CD8-positive, alpha-beta T cell (primary cell): ENCODE measurements at regions of chr16 and their contacts with region 1.

Region 1: GRCh38 chr16:2867987-2868789 is 10.2 kb upstream of the PRSS22 start:
- DNase-seq: peak; percentile 91 to 98 (median 95)
- ATAC-seq: peak; percentile 98
- H3K4me3 ChIP-seq: peak overlapping the region; percentile 77
- H3K4me3 Mint-ChIP-seq: peak overlapping the region; percentile 83
- H3K27ac ChIP-seq: peak overlapping the region; percentile 52 to 85
- H3K27ac Mint-ChIP-seq: peak overlapping the region; percentile 87
- H3K4me1 ChIP-seq: peaks cover 10% of the 10 kb centered on the region
- H3K4me1 Mint-ChIP-seq: peaks cover 18% of the 10 kb centered on the region
- H3K27me3 ChIP-seq: no peaks in the 10 kb centered on the region
- H3K27me3 Mint-ChIP-seq: no peaks in the 10 kb centered on the region
- CTCF ChIP-seq: peak; percentile 92

Region 2: GRCh38 chr16:2673066-2673999 is 194.9 kb before region 1 on chr16:
- CTCF ChIA-PET with region 1: no interaction called
- POLR2A ChIA-PET with region 1: no interaction called
- intact Hi-C with region 1: loop called in 1 of 2 experiments (anchors 5 kb)
- DNase-seq: peak; percentile 91 to 98 (median 95)
- ATAC-seq: peak; percentile 92
- H3K4me3 ChIP-seq: peak overlapping the region; percentile 80 to 94
- H3K4me3 Mint-ChIP-seq: peak overlapping the region; percentile 84
- H3K27ac ChIP-seq: peak overlapping the region; percentile 76 to 78
- H3K27ac Mint-ChIP-seq: peak overlapping the region; percentile 80
- H3K4me1 ChIP-seq: peaks cover 14% of the 10 kb centered on the region
- H3K4me1 Mint-ChIP-seq: peaks cover 35% of the 10 kb centered on the region
- H3K27me3 ChIP-seq: no peaks in the 10 kb centered on the region
- H3K27me3 Mint-ChIP-seq: no peaks in the 10 kb centered on the region
- CTCF ChIP-seq: no peak

Region 3: DNA sequence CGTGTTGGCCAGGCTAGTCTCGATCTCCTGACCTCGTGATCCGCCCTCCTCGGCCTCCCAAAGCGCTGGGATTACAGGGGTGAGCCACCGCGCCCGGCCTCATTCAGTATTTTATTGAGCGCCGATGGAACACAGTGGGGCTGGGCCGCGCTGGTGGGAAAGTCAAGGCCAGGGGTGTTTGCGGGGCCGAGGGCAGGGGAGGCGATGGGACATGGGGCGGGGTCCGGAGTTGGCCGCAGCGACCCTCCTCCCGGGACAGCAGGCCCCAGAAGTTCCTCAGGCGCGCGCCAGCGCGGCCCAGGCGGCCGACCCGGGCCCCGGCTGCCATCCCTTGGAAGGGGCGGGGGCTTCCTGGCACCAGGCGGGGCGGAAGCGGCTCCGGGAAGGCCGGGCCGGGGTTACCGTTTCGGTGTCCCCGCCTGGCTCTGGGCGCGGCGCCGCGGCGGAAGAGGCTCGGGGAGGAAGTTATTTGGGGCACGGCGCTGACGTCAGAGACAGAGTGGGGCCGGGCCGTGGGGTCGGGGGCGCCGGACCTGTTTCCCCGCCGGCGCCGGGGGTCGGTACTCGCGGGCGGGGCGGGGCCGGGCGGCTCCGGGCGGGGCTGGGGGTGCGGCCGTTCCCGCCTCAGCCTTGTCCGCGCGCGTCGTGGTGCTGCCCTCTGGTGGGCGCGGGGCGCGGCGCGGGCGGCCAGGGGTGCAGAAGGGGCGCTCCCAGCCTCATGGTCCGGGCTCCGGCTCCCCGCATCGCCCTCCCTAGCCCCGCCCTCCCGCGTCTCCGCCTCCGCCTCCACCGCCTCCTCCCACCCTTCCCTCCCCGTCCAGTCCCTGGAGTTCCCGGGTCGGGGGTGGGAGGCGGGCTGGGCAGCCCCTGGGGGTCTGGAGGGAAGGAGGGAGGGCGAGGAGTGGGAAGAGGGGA is 147.2 kb before region 1 on chr16:
- CTCF ChIA-PET with region 1: no interaction called
- POLR2A ChIA-PET with region 1: no interaction called
- intact Hi-C with region 1: loop called (anchors 2 to 10 kb)
- DNase-seq: peak; percentile 69 to 93 (median 82)
- ATAC-seq: peak; percentile 90
- H3K4me3 ChIP-seq: peak overlapping the region; percentile 52 to 62
- H3K4me3 Mint-ChIP-seq: peak overlapping the region; percentile 78
- H3K27ac ChIP-seq: peak overlapping the region; percentile 40 to 57
- H3K27ac Mint-ChIP-seq: peak overlapping the region; percentile 79
- H3K4me1 ChIP-seq: peaks cover 1% of the 10 kb centered on the region
- H3K4me1 Mint-ChIP-seq: no peaks in the 10 kb centered on the region
- H3K27me3 ChIP-seq: no peaks in the 10 kb centered on the region
- H3K27me3 Mint-ChIP-seq: peaks cover 12% of the 10 kb centered on the region
- CTCF ChIP-seq: peak; percentile 77

Region 4: DNA sequence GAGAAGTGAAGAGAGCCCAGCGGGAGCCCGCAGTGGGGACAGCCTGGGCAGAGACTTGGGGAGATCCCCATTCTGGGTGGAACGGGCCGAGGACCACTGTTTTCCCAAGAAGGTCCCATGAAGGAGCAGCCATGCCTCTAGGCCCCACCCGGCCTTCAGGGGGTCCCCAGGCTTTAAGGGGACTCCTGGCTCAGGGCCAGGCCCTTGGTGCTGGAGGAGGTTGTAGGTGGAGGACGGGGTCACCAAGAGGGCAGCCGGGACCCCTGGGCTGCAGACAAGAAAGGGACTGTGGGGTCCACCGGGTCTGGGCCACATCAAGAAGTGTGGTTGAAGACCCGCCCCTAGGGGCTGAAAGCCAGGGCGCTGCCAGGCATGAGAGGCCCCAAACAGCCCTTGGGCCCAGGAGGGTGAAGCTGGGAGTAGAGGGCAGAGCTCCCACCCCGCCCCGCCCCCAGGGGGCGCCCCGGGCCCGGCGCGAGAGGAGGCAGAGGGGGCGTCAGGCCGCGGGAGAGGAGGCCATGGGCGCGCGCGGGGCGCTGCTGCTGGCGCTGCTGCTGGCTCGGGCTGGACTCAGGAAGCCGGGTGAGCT is 51.3 kb before region 1 on chr16 and contains the start of gene PRSS21:
- CTCF ChIA-PET with region 1: no interaction called
- POLR2A ChIA-PET with region 1: no interaction called
- intact Hi-C with region 1: no loop called
- DNase-seq: peak in 5 of 9 experiments; percentile 11 to 62 (median 43)
- ATAC-seq: peak; percentile 55
- H3K4me3 ChIP-seq: no peak within 1 kb of the TSS
- H3K4me3 Mint-ChIP-seq: no peak within 1 kb of the TSS
- H3K27ac ChIP-seq: no peak within 1 kb of the TSS
- H3K27ac Mint-ChIP-seq: no peak within 1 kb of the TSS
- H3K4me1 ChIP-seq: no peaks in the 10 kb centered on the region
- H3K4me1 Mint-ChIP-seq: no peaks in the 10 kb centered on the region
- H3K27me3 ChIP-seq: peaks cover 0 to 5% of the 10 kb centered on the region in 2 experiments
- H3K27me3 Mint-ChIP-seq: peaks cover 12% of the 10 kb centered on the region
- CTCF ChIP-seq: no peak
- total RNA-seq, gene PRSS21: 1.4 to 2.5 TPM

Region 5: GRCh38 chr16:2838928-2839327 is 29.3 kb before region 1 on chr16:
- CTCF ChIA-PET with region 1: interaction called, 71 read pairs
- POLR2A ChIA-PET with region 1: interaction called, 12 read pairs
- intact Hi-C with region 1: loop called (anchors 1 kb)
- DNase-seq: peak; percentile 34 to 80 (median 63)
- ATAC-seq: peak; percentile 76
- H3K4me3 ChIP-seq: no peak overlapping the region
- H3K4me3 Mint-ChIP-seq: no peak overlapping the region
- H3K27ac ChIP-seq: no peak overlapping the region
- H3K27ac Mint-ChIP-seq: peak overlapping the region; percentile 64
- H3K4me1 ChIP-seq: peaks cover 49% of the 10 kb centered on the region
- H3K4me1 Mint-ChIP-seq: peaks cover 35% of the 10 kb centered on the region
- H3K27me3 ChIP-seq: peaks cover 0 to 4% of the 10 kb centered on the region in 2 experiments
- H3K27me3 Mint-ChIP-seq: peaks cover 10% of the 10 kb centered on the region
- CTCF ChIP-seq: peak; percentile 63

Region 6: GRCh38 chr16:2905431-2906387 is 37.5 kb after region 1 on chr16:
- CTCF ChIA-PET with region 1: interaction called, 10 read pairs
- POLR2A ChIA-PET with region 1: no interaction called
- intact Hi-C with region 1: no loop called
- DNase-seq: peak; percentile 73 to 96 (median 85)
- ATAC-seq: peak; percentile 83
- H3K4me3 ChIP-seq: peak overlapping the region; percentile 86 to 88
- H3K4me3 Mint-ChIP-seq: peak overlapping the region; percentile 91
- H3K27ac ChIP-seq: peak overlapping the region in 1 of 2 experiments; percentile 22
- H3K27ac Mint-ChIP-seq: peak overlapping the region; percentile 55
- H3K4me1 ChIP-seq: peaks cover 11% of the 10 kb centered on the region
- H3K4me1 Mint-ChIP-seq: peaks cover 23% of the 10 kb centered on the region
- H3K27me3 ChIP-seq: peaks cover 0 to 2% of the 10 kb centered on the region in 2 experiments
- H3K27me3 Mint-ChIP-seq: no peaks in the 10 kb centered on the region
- CTCF ChIP-seq: no peak

Region 7: DNA sequence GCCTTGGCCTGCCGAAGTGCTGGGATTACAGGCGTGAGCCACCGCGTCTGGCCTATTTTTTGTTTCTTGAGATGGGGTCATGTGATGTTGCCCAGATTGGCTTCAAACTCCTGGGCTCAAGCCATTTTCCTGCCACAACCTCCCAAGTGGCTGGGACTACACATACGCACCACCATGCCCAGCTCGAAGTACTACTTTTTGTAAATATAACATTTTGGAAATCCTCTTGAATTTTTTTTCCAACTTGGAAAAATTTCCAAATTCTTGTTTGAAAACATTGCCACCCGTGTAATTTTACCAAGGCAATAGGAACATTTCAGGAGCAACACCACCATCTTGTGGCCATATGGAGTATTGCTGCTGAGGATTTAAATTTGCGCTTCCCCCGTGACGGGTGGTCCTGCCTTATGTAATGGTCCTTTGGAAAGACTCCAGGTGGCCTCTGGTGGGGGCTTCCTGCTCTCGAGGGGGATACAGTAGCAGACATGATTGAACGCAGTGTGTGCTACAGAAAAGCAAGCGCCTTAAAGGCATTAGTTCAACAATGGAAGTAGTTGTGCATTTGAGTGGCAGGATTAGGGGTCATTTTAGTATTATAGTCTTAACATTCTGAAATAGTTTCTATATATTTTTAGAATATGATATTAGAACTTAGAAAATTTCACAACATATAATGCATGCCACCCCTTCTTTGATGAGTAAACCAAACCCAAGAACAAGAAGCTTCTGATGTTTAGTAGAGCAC is 51.5 kb after region 1 on chr16:
- CTCF ChIA-PET with region 1: interaction called, 55 read pairs
- POLR2A ChIA-PET with region 1: no interaction called
- intact Hi-C with region 1: no loop called
- DNase-seq: peak; percentile 38 to 84 (median 67)
- ATAC-seq: peak; percentile 86
- H3K4me3 ChIP-seq: no peak overlapping the region
- H3K4me3 Mint-ChIP-seq: no peak overlapping the region
- H3K27ac ChIP-seq: no peak overlapping the region
- H3K27ac Mint-ChIP-seq: no peak overlapping the region
- H3K4me1 ChIP-seq: no peaks in the 10 kb centered on the region
- H3K4me1 Mint-ChIP-seq: peaks cover 5% of the 10 kb centered on the region
- H3K27me3 ChIP-seq: no peaks in the 10 kb centered on the region
- H3K27me3 Mint-ChIP-seq: no peaks in the 10 kb centered on the region
- CTCF ChIP-seq: peak; percentile 96